ENCODE measurements at regions of chr1 and their contacts with region 1.

Region 1: DNA sequence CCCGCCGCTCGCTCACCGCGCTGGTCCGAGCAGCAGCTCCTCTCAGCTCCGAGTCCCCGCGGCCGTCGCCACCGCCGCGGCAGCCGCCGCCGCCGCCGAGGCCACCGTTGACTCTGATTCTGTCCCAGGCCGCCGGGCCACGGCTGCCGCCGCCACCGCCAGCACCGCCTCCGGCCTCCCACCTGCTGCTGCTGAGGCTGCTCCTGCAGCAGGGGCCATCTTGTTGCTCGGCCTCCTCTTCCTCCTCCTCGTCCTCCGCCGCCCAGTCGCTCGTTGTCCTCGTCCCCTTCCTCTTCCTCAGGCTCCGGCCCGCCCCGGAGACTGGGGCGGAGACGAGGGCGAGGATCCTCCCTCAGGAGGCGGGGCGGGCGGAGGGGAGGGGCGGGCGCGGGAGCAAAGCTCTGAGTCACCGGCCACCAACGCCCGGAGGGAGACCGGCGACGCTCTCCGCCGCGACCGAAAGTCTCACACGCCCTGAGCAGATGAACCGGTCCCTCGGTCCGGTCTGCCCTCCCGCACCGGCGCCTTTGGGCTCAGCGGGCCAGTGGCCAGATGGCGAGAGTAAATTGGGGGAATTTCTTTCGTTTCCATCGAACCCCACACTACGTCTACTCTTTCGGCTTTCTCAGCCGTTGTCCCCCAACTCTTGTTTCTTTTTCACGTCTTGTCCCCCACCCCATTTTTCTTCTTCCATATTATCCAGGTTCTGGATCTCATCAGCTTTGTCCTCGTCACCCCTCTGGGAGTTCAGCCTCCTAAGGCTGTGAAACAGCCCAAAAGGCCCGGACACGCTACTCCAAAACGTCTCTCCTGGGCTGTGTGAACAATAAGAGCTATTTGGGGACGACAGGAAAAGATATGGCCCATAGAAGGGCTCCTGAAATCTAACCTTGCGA is at the start of gene RC3H1:
- DNase-seq: peak; percentile 91
- ATAC-seq: peak; percentile 98 to 99
- total RNA-seq, gene RC3H1: 21.1 to 21.9 TPM

Region 2: DNA sequence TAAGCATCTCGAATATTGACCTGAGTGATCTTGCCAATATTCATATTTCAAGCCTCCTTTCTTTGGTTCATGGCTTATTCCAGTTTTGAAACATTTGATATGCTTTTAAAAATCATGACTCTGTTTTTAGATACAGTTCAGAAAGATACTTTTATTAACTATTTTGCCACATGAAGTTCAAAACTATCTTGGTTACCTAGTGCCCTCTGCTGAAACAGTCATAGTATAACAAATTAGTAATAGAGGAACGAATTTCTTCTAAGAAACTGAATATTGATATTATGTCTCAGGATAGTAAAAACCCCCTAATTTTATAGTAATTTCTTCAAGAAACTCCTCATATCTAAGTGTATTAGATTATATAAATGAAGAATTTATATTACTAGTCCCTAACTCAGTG is 52.4 kb after region 1 on chr1:
- intact Hi-C with region 1: loop called in 1 of 2 experiments (anchors 10 kb)
- DNase-seq: no peak
- ATAC-seq: no peak

Region 3: GRCh38 chr1:175802407-175803131 is 1780.2 kb after region 1 on chr1:
- intact Hi-C with region 1: no loop called
- DNase-seq: no peak
- ATAC-seq: peak; percentile 70 to 81